Activated naive CD4-positive, alpha-beta T cell treated with anti-CD3 and anti-CD28 coated beads for 36 hours (primary cell): ENCODE measurements at regions of chr6 and their contacts with region 1.

Region 1: DNA sequence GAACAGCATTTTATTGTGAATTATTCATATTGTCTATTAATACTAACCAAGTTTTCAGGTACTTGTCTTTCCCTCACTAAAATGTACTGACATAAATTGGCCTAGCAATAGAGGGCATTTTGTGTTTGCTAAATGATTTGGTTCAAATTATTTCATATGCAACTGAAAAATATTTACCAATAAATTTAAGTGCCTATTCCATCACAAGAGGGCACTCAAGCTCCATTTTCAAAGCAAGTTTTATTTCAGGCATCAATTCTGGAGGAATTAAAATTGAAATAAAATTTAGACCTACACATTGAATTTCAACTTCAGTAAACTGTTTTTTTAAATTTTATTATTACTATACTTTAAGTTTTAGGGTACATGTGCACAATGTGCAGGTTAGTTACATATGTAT is 114.3 kb upstream of the SYNCRIP start:
- DNase-seq: no peak
- H3K4me3 Mint-ChIP-seq: no peak overlapping the region
- H3K27ac Mint-ChIP-seq: no peak overlapping the region
- H3K4me1 Mint-ChIP-seq: no peaks in the 10 kb centered on the region
- H3K27me3 Mint-ChIP-seq: peaks cover 6% of the 10 kb centered on the region

Region 2: GRCh38 chr6:85911067-85911466 is 154.1 kb after region 1 on chr6:
- CTCF ChIA-PET with region 1: no interaction called
- intact Hi-C with region 1: no loop called
- DNase-seq: no peak
- H3K4me3 Mint-ChIP-seq: no peak overlapping the region
- H3K27ac Mint-ChIP-seq: no peak overlapping the region
- H3K4me1 Mint-ChIP-seq: no peaks in the 10 kb centered on the region
- H3K27me3 Mint-ChIP-seq: peaks cover 7% of the 10 kb centered on the region

Region 3: DNA sequence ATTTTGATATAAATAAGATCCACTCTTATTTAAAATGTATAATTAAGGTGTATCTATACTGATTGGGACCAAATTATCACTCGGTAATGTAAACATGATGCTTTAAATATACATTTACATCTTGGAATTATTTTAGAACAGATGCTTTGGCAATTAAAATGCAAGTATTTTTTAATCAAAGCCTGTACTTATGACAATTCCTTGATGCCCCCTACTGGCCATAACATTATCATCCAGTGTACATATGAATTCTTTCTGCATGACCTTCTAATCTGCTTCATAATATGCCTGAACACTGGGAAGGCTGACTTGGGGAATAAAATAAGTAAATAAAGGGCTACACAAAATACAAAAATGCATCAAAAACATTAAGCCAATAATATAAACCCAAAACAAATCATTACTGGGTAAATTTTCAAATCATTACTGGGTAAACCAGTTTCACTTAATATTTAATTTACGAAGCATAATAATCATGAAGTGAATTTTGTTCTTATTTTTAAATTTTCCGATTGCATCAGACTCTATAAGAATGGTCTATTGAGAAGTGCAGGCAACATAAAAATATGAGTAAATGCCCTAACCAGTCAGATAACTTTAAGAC is 1272.8 kb after region 1 on chr6:
- CTCF ChIA-PET with region 1: no interaction called
- intact Hi-C with region 1: loop called (anchors 5 kb)
- DNase-seq: no peak
- H3K4me3 Mint-ChIP-seq: no peak overlapping the region
- H3K27ac Mint-ChIP-seq: no peak overlapping the region
- H3K4me1 Mint-ChIP-seq: no peaks in the 10 kb centered on the region
- H3K27me3 Mint-ChIP-seq: no peaks in the 10 kb centered on the region